RWPE1 (cell line): ENCODE measurements at regions of chr6 and their contacts with region 1.

Region 1: GRCh38 chr6:29995340-29995777 is 53.0 kb downstream of the HLA-A start:
- DNase-seq: no peak
- H3K27ac ChIP-seq: peak overlapping the region; percentile 74
- CTCF ChIP-seq: no peak

Region 2: DNA sequence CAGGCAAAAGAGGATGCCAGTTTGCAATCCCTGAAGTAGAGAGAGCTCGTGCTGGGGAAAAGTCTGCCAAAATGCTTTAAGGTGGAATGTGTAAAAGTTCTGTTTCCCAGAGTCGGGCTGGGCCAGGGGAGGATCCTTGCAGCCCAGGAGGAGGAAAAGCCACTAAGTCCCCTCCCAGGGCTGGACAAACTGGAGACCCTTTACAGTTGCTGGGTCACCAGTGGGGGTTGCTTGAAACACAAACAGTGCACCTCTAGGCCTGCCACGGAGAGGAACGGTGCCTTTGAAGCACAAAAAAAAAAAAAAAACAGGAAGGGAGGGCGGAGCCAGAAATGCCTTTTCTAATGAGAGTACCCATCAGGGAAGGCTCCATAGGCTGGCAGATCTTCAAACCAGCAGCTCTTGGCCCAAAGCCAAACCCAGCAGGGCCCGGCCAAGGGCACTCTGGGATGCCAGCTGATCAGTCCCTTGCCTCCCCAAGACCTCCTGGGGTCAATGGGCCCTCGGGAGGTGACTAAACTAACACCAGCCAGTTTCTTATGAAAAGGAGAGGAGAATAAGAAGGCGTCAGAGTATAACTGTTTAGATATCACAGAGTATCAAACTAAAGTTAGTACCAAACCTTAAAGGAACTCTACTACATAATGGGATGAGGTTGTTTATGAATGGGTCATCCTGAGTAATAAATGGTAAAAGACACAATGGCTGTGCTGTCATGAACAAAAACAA is 29.3 kb before region 1 on chr6:
- CTCF ChIA-PET with region 1: interaction called, 12 read pairs
- POLR2A ChIA-PET with region 1: no interaction called
- DNase-seq: peak; percentile 49
- H3K27ac ChIP-seq: peak overlapping the region; percentile 94
- CTCF ChIP-seq: no peak